Ovary (tissue), 10 donors: ENCODE measurements at regions of chr7 and their contacts with region 1.

Region 1: DNA sequence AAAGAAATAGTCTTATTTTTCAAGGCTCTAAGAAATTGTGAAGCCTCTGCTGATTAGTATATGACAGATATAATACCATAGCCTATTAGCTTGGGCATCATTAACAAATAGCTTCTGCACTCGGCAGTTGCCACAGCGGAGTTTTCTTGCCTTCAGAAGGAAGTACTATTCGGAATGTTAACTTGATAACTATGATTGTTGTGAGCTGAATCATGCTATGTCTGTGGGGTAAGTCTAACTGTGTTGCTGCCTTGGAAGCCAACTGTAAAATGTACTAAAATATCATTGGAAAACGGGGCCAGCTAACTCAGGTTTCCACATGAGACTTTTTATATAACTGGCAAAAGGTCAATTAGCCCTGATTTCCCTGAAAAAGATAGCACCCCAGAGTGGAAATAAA is 93.2 kb downstream of the TWIST1 start:
- DNase-seq: no peak
- H3K4me3 ChIP-seq: no peak overlapping the region
- H3K27ac ChIP-seq: no peak overlapping the region
- H3K4me1 ChIP-seq: no peaks in the 10 kb centered on the region
- H3K27me3 ChIP-seq: no peaks in the 10 kb centered on the region
- CTCF ChIP-seq: no peak
- EP300 ChIP-seq: no peak
- POLR2A ChIP-seq: no peak

Region 2: GRCh38 chr7:18895456-18895855 is 128.8 kb before region 1 on chr7:
- intact Hi-C with region 1: loop called in 1 of 4 experiments (anchors 5 kb)
- DNase-seq: no peak
- H3K4me3 ChIP-seq: no peak overlapping the region
- H3K27ac ChIP-seq: no peak overlapping the region
- H3K4me1 ChIP-seq: no peaks in the 10 kb centered on the region
- H3K27me3 ChIP-seq: no peaks in the 10 kb centered on the region
- CTCF ChIP-seq: no peak
- EP300 ChIP-seq: no peak
- POLR2A ChIP-seq: no peak

Region 3: GRCh38 chr7:19262826-19263225 is 238.6 kb after region 1 on chr7:
- intact Hi-C with region 1: loop called in 1 of 4 experiments (anchors 5 kb)
- DNase-seq: no peak
- H3K4me3 ChIP-seq: no peak overlapping the region
- H3K27ac ChIP-seq: no peak overlapping the region
- H3K4me1 ChIP-seq: no peaks in the 10 kb centered on the region
- H3K27me3 ChIP-seq: no peaks in the 10 kb centered on the region
- CTCF ChIP-seq: no peak
- EP300 ChIP-seq: no peak
- POLR2A ChIP-seq: no peak

Region 4: DNA sequence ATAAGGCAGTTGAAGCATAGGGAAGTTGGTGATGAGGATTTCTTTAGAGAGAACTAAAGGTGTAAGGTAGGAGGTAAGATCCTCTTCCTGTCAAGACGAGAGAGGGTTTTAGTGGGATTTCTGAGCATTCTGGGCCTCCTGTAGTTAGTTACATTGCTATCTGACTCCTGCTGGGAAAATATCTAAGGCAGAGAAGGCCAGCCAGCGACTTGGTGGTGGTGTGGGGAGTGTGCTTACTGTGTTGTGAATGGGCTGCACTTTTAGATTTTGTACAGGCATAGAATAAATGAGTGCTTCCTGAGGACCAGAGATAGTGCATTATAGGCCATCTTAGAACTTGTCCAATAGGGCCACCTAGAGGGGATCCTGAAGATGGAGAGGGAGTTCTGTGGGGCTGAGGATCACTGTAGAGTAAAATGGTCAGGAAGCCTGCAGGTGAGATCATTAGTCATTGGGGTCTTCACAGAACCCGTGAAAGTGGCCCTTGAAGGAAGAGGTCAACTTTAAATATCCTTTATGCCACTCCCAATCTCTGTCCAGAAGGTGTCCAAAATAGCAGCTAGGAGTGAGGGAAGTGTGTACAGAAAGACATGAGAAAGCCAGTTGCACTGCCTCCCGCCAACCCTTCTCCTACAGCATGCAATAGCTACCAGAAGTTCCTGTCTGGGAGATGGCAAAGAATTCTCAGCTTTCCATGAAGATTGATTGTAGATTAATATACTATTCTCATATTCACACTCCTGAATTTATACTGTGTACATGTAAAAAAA is 417.9 kb after region 1 on chr7:
- intact Hi-C with region 1: no loop called
- DNase-seq: no peak
- H3K4me3 ChIP-seq: no peak overlapping the region
- H3K27ac ChIP-seq: no peak overlapping the region
- H3K4me1 ChIP-seq: no peaks in the 10 kb centered on the region
- H3K27me3 ChIP-seq: no peaks in the 10 kb centered on the region
- CTCF ChIP-seq: no peak
- EP300 ChIP-seq: no peak
- POLR2A ChIP-seq: no peak

Region 5: DNA sequence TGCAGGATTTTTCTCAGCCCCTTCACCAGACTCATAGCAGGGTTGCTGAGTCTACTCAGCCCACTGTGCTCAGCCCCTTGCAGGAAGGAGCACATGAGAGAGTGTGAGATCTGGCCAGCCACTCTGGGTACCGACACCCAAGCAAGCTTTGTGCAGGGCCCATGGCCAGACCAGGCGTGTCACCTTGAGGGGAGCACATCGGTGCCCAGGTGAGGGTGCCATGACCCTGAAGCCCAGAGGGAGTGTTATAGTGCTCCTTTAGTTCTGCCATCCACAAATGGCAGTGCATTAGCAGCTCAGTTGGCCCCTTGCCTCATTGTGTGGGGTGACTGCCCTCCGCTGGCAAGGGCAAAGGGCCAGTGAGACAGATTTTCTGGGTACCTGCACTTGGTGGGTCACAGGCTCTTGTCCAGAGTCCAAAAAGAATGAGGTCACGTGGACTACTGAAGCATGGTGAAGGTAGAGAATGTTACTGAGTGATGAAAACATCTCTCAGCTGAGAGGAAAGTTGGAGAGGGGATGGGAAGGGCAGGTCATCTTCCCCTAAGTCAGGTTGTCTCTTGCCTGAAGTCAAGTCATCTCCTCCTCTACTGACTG is 1011.1 kb after region 1 on chr7:
- intact Hi-C with region 1: no loop called
- DNase-seq: no peak
- H3K4me3 ChIP-seq: no peak overlapping the region
- H3K27ac ChIP-seq: no peak overlapping the region
- H3K4me1 ChIP-seq: no peaks in the 10 kb centered on the region
- H3K27me3 ChIP-seq: no peaks in the 10 kb centered on the region
- CTCF ChIP-seq: no peak
- EP300 ChIP-seq: no peak
- POLR2A ChIP-seq: no peak